Kidney (tissue), 22 donors: ENCODE measurements at regions of chr12 and their contacts with region 1.

Region 1: GRCh38 chr12:70733385-70733784 is 96.2 kb upstream of the PTPRB start:
- DNase-seq: peak in 3 of 5 donors; percentile 45 to 91 (median 86)
- H3K4me3 ChIP-seq: no peak overlapping the region
- H3K27ac ChIP-seq: no peak overlapping the region
- H3K4me1 ChIP-seq: no peaks in the 10 kb centered on the region
- H3K27me3 ChIP-seq: no peaks in the 10 kb centered on the region
- CTCF ChIP-seq: peak; percentile 84

Region 2: DNA sequence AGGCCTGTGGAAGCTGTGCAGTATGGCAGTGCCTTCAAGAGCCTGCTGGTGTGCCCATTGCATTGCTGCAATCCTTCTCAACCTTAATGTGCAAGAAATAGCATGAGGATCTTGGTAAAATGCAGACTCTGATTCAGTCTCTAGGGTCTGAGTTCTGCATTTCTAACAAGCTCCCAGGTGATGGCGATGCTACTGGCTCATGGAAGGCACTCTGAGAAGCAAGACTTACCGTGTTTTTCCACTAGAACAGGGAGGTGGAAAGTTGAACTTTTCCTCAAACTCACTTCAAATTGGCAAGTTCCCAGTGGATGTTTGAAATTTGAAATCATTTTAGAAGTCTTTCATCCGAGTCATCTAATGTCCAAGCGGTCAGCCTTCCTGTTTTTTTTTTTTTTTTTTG is 852.8 kb before region 1 on chr12:
- intact Hi-C with region 1: loop called (anchors 10 kb)
- DNase-seq: no peak
- H3K4me3 ChIP-seq: no peak overlapping the region
- H3K27ac ChIP-seq: no peak overlapping the region
- H3K4me1 ChIP-seq: peaks cover 0 to 6% (median 6%) of the 10 kb centered on the region in 3 donors
- H3K27me3 ChIP-seq: no peaks in the 10 kb centered on the region
- CTCF ChIP-seq: no peak